K562 (cell line): ENCODE measurements at regions of chr20 and their contacts with region 1.

Region 1: DNA sequence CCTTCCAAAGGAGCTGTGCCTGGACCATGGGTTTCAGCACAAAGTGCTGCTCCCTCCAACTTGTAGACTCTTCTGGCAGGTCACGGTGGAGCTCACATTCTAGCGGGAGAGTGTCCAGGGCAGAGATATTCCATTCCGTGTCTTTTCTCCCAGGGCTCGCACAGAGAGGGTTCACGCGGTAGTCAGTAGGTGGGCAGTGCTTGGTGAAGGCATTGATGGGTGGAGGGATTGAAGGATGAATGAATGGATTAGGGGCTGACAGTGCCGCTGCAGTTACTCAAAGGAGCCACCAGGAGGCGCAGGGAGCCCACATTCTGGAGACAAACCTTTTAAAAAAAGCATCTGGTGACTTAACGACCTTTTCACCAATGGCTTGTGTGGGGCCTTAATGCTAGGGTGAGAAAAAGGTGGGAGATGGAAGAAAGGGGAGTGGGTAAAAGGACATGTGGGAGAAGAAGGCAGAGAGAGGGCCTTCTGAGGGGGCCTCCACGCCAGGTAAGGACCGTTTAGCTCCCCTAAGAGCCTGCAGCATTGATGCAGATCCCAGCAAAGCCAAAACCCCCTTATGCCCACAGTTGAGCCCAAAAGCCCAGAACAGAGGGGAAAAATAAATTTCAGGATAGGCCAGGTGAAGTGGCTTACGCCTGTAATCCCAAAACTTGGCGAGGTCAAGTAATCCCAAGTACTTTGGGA is 17.5 kb upstream of the FAM110A start:
- DNase-seq: peak; percentile 51 to 78 (median 60)
- ATAC-seq: peak; percentile 57
- H3K4me3 ChIP-seq: no peak overlapping the region
- H3K27ac ChIP-seq: no peak overlapping the region
- H3K4me1 ChIP-seq: peaks cover 9 to 10% of the 10 kb centered on the region in 2 experiments; a peak in 4 of 5 replicates
- H3K27me3 ChIP-seq: no peaks in the 10 kb centered on the region
- CTCF ChIP-seq: peak; percentile 82 to 91 (median 90)
- EP300 ChIP-seq: no peak
- POLR2A ChIP-seq: no peak
- RAD21 ChIP-seq: peak; percentile 90 to 93

Region 2: GRCh38 chr20:931401-931800 is 115.3 kb after region 1 on chr20:
- CTCF ChIA-PET with region 1: no interaction called
- POLR2A ChIA-PET with region 1: no interaction called
- in situ Hi-C with region 1: no loop called
- intact Hi-C with region 1: no loop called
- DNase-seq: no peak
- ATAC-seq: no peak
- H3K4me3 ChIP-seq: no peak overlapping the region
- H3K27ac ChIP-seq: no peak overlapping the region
- H3K4me1 ChIP-seq: no peaks in the 10 kb centered on the region; a peak in 1 of 5 replicates
- H3K27me3 ChIP-seq: peaks cover 0 to 9% of the 10 kb centered on the region in 2 experiments; a peak in 3 of 5 replicates
- CTCF ChIP-seq: no peak
- EP300 ChIP-seq: no peak
- POLR2A ChIP-seq: no peak
- RAD21 ChIP-seq: no peak

Region 3: DNA sequence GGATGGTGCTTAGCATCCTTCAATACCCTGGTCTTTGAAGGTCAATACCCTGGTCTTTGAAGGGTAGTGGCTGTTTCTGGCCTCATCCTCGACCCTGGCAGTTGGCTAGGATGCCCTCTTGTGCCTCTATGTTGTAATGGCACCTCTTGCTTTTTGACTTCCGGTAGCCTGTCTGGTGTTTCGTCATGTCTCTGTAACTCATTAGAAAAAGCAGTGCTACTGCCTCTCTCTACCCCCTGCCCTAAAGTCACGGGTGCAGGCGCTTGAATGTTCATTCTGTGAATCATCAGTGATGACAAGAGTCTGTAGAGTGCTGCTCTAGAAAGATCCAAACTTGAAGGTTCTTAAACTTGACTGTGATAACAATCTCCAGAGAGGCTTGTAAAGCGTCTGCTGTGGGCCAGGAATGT is 157.7 kb after region 1 on chr20:
- CTCF ChIA-PET with region 1: interaction called, 6 read pairs
- POLR2A ChIA-PET with region 1: interaction called, 3 read pairs
- in situ Hi-C with region 1: loop called (anchors 5 kb)
- intact Hi-C with region 1: loop called (anchors 5 kb)
- DNase-seq: peak; percentile 60 to 71 (median 66)
- ATAC-seq: peak; percentile 92
- H3K4me3 ChIP-seq: no peak overlapping the region
- H3K27ac ChIP-seq: no peak overlapping the region
- H3K4me1 ChIP-seq: peaks cover 0 to 7% of the 10 kb centered on the region in 2 experiments; a peak in 3 of 5 replicates
- H3K27me3 ChIP-seq: no peaks in the 10 kb centered on the region; a peak in 3 of 5 replicates
- CTCF ChIP-seq: peak; percentile 51 to 68 (median 59)
- EP300 ChIP-seq: no peak
- POLR2A ChIP-seq: no peak
- RAD21 ChIP-seq: peak; percentile 51 to 70

Region 4: DNA sequence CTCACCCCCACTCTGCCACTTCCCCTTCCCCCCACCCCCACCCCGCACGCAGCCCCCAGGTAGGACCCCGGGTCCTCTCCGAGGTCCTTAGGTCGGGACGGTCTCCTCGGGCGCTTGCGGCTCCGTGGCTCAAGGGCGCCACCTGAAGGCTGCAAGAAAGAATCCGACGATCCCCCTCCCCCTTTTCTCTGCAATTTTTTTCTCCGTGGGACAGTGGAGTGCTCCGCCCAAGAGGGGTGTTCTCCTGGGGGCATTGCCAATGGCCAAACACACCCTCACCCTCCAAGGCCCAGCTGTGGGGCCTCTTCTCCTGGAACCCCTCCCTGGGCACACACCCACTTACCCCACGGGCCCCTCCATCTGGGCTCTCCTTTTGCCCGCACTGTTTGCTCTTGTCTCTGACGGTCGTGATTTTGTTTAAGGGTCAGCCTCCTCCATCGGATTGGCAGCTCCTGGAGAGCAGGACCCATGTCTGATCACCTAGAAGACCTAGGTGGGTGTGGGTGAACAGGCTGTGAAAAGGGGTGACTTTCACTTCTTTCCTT is 369.8 kb after region 1 on chr20:
- CTCF ChIA-PET with region 1: no interaction called
- POLR2A ChIA-PET with region 1: no interaction called
- in situ Hi-C with region 1: loop called (anchors 10 kb)
- intact Hi-C with region 1: loop called (anchors 10 kb)
- DNase-seq: peak; percentile 68 to 83 (median 71)
- ATAC-seq: peak; percentile 74
- H3K4me3 ChIP-seq: peak overlapping the region; percentile 58
- H3K27ac ChIP-seq: peak overlapping the region; percentile 59; the same call in 1 of the 3 replicates
- H3K4me1 ChIP-seq: peaks cover 59 to 67% of the 10 kb centered on the region in 2 experiments
- H3K27me3 ChIP-seq: no peaks in the 10 kb centered on the region
- CTCF ChIP-seq: peak; percentile 60 to 67 (median 65)
- EP300 ChIP-seq: no peak
- POLR2A ChIP-seq: no peak
- RAD21 ChIP-seq: peak in 1 of 2 experiments; percentile 47; a peak in 3 of 4 replicates

Region 5: DNA sequence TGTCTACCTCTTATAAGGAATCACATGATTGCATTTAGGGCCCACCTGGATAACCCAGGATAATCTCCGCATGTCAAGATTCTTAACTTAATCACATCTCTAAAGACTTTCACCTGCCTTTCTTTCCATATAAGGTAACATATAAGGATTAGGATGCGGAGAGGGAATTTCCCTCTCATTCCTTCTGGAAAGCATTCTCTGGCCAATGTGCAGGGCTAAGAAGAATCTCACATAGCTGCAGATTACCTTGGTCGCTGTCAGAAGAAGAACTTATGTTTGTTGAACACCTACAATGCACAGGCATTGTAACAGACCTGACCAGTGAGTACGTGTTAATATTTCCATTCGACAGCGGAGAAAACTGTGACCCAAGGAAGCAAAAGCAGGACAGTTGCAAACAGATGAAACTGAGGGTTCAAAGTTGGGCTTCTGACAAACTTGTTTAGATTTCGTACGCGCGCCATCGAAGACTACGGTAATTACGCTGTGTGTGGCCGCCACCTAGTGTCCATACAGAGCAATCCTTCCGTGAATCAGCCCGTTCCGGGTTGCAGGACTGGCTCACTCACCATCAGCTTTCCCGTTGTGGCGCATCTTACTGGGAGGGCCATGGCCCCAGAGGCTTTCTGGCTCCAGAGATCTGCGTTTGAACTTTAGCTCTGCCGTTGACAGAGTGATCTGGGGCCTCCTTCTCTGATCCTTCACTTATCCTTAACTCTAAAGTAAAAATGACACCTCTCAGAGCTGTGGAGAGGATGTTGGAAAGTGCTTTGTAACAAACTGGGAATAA is 396.7 kb after region 1 on chr20:
- CTCF ChIA-PET with region 1: interaction called, 5 read pairs
- POLR2A ChIA-PET with region 1: no interaction called
- in situ Hi-C with region 1: no loop called
- intact Hi-C with region 1: loop called (anchors 1 kb)
- DNase-seq: peak; percentile 61 to 89 (median 67)
- ATAC-seq: peak; percentile 93
- H3K4me3 ChIP-seq: no peak overlapping the region
- H3K27ac ChIP-seq: no peak overlapping the region
- H3K4me1 ChIP-seq: peaks cover 13 to 35% of the 10 kb centered on the region in 2 experiments; a peak in 4 of 5 replicates
- H3K27me3 ChIP-seq: no peaks in the 10 kb centered on the region
- CTCF ChIP-seq: peak; percentile 70 to 84 (median 74)
- EP300 ChIP-seq: no peak
- POLR2A ChIP-seq: no peak
- RAD21 ChIP-seq: peak; percentile 79 to 87